Dendritic cell treated with granulocyte-macrophage colony-stimulating factor and Interleukin-4, amounts not matched to agents 40 ng/mL and 50 ng/mL, for 4 days (primary cell): ENCODE measurements at regions of chr14 and their contacts with region 1.

Region 1: GRCh38 chr14:75258615-75259466 is 19.8 kb upstream of the FOS start:
- H3K4me3 Mint-ChIP-seq: peak overlapping the region; percentile 79
- H3K27ac Mint-ChIP-seq: peak overlapping the region; percentile 99
- H3K4me1 Mint-ChIP-seq: peaks cover 47% of the 10 kb centered on the region
- H3K27me3 Mint-ChIP-seq: no peaks in the 10 kb centered on the region

Region 2: DNA sequence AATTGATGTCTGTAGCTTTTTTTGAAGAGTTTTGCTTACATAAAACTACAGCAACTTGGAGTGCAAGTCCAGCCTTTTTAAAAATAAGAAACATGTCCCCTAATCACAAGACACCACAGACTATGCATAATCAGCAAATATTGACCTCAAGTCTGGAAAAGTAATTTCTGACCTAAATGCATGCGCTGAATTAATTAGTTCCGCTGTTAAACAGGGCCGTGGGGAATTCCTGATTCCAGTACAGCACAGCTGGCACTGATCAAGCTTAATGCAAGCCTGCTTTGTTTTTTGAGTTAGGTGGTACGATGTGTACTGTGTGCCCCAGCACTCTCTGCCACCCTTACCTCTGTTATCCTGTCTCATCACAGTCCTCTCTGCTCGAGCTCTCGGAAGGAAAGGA is 216.8 kb before region 1 on chr14:
- intact Hi-C with region 1: no loop called
- H3K4me3 Mint-ChIP-seq: no peak overlapping the region
- H3K27ac Mint-ChIP-seq: no peak overlapping the region
- H3K4me1 Mint-ChIP-seq: peaks cover 5% of the 10 kb centered on the region
- H3K27me3 Mint-ChIP-seq: no peaks in the 10 kb centered on the region

Region 3: GRCh38 chr14:75147423-75148071 is 111.3 kb before region 1 on chr14:
- intact Hi-C with region 1: loop called (anchors 5 kb)
- H3K4me3 Mint-ChIP-seq: no peak overlapping the region
- H3K27ac Mint-ChIP-seq: peak overlapping the region; percentile 63
- H3K4me1 Mint-ChIP-seq: peaks cover 87% of the 10 kb centered on the region
- H3K27me3 Mint-ChIP-seq: no peaks in the 10 kb centered on the region

Region 4: GRCh38 chr14:75188520-75189268 is 70.1 kb before region 1 on chr14:
- intact Hi-C with region 1: loop called (anchors 2 kb)
- H3K4me3 Mint-ChIP-seq: no peak overlapping the region
- H3K27ac Mint-ChIP-seq: peak overlapping the region; percentile 80
- H3K4me1 Mint-ChIP-seq: peaks cover 44% of the 10 kb centered on the region
- H3K27me3 Mint-ChIP-seq: peaks cover 4% of the 10 kb centered on the region

Region 5: DNA sequence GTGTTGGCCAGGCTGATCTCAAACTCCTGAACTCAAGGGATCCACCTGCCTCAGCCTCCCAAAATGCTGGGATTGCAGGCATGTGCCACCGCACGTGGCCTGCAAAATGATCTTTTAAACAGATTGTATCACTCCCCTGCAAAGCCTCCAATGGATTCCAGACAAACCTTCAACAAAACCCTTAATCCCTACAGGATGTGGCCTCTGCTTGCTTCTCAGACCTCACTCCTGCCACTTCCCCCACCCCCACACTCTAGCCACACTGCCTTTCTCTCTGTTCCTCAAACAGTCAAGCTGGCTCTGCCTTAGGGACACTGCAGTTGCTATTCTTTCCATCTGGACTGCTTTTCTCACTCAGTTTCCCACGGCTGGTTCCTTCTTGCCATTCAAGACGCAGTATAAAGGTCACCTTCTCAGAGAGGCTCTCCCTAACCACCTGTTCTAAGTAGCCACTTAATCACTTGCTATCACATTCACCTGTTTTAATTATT is 35.1 kb before region 1 on chr14:
- intact Hi-C with region 1: loop called (anchors 5 kb)
- H3K4me3 Mint-ChIP-seq: no peak overlapping the region
- H3K27ac Mint-ChIP-seq: peak overlapping the region; percentile 45
- H3K4me1 Mint-ChIP-seq: peaks cover 53% of the 10 kb centered on the region
- H3K27me3 Mint-ChIP-seq: no peaks in the 10 kb centered on the region

Region 6: GRCh38 chr14:75278422-75279161 is 19.8 kb after region 1 on chr14 and contains the start of gene FOS:
- intact Hi-C with region 1: loop called (anchors 1 kb)
- H3K4me3 Mint-ChIP-seq: peak within 1 kb of the TSS; percentile 90
- H3K27ac Mint-ChIP-seq: peak within 1 kb of the TSS; percentile 98
- H3K4me1 Mint-ChIP-seq: peaks cover 72% of the 10 kb centered on the region
- H3K27me3 Mint-ChIP-seq: peaks cover under 1% of the 10 kb centered on the region

Region 7: GRCh38 chr14:75293920-75294642 is 35.2 kb after region 1 on chr14:
- intact Hi-C with region 1: loop called (anchors 1 kb)
- H3K4me3 Mint-ChIP-seq: peak overlapping the region; percentile 77
- H3K27ac Mint-ChIP-seq: peak overlapping the region; percentile 98
- H3K4me1 Mint-ChIP-seq: peaks cover 56% of the 10 kb centered on the region
- H3K27me3 Mint-ChIP-seq: no peaks in the 10 kb centered on the region

Region 8: DNA sequence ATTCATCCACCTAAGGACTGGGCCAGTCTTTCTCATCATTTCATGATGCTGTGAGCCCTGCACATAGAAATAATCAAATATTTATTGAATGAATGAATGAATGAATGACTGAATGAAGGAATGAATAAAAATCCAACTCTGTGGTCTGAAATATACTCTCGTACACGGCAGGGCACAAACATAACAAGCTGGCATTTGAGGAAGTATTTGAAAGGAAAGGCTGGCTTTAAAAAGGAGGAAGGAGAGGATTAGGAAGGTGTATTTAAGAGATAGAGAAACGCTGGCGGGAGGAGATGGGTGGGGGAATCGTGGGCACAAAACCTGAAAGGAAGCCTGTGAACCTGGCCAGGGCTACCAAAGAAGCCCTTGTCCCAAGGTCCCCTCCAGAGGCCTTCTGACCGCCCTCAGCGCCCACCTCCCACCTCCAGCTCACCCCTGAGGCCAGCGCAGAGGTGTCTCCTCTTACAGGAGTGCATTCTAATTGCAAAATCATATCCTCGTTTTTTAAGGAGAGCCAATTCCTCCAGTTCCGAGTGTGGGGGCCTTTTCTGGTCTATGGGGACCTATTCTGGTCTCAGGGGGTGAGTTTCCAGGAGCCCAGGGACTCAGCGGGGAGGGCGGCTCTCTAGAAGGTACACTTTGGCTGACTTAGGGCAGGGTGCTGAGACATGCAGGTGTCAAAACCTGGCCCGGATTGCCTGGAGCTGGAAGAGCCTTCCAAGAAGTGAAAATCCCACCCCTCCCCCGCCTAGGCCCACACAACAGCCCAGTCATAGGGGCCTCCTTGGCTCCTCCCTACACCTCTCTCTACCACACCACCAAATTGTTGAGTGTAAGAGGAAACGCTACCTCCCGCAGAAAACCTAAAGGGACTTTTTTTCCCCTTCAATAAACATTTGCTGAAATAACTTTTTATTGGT is 160.3 kb after region 1 on chr14:
- intact Hi-C with region 1: no loop called
- H3K4me3 Mint-ChIP-seq: no peak overlapping the region
- H3K27ac Mint-ChIP-seq: peak overlapping the region; percentile 60
- H3K4me1 Mint-ChIP-seq: peaks cover 22% of the 10 kb centered on the region
- H3K27me3 Mint-ChIP-seq: no peaks in the 10 kb centered on the region